Activated CD4-positive, alpha-beta T cell treated with anti-CD3 and anti-CD28 coated beads, Interleukin-2, amount 10 ng/mL, durations not matched to agents 7 days and 5 days (primary cell): ENCODE measurements at regions of chrX and their contacts with region 1.

Region 1: GRCh38 chrX:153470435-153471363 is at the start of gene HAUS7:
- DNase-seq: peak; percentile 86
- H3K4me3 Mint-ChIP-seq: peak within 1 kb of the TSS; percentile 79
- H3K27ac Mint-ChIP-seq: peak within 1 kb of the TSS; percentile 89
- H3K4me1 Mint-ChIP-seq: peaks cover 24% of the 10 kb centered on the region
- H3K27me3 Mint-ChIP-seq: peaks cover 2% of the 10 kb centered on the region
- total RNA-seq, gene HAUS7: 37.6 to 45.9 TPM

Region 2: GRCh38 chrX:153443481-153444332 is 27.0 kb before region 1 on chrX:
- CTCF ChIA-PET with region 1: no interaction called
- POLR2A ChIA-PET with region 1: no interaction called
- DNase-seq: no peak
- H3K4me3 Mint-ChIP-seq: no peak overlapping the region
- H3K27ac Mint-ChIP-seq: no peak overlapping the region
- H3K4me1 Mint-ChIP-seq: no peaks in the 10 kb centered on the region
- H3K27me3 Mint-ChIP-seq: peaks cover 2% of the 10 kb centered on the region

Region 3: DNA sequence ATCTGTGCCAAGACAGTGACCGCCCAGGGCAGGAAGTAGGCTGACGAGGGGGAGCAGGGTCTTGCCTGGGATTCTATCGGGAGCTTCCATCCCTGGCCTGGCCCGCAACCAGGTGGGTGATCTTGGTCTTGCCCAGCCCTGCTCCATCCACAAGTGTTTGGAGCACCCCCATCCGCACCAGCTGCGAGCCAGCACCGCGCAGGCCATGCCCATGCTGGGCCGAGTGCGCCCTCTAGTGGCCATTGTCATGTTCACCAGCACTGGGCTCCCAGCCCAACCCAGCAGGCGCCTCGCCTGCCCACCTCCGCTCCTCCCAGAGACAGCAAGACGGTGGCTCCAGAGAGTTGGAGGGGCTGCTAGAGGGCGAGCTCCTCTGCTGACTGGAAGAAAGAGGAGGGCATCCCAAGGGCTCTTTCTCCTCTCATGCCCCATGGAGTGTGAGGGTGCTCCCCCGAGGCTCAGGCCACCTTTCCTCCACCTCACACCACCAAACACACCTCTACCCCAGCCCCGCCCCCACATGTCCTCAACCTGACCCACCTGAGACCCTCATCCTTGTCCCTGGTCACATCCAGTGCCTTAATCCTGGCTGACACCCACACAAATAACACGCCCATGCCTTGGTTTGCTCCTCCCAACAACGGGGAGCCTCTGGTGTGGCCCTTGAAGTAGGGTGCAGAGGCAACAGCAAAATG is 36.9 kb after region 1 on chrX:
- CTCF ChIA-PET with region 1: interaction called, 30 read pairs
- POLR2A ChIA-PET with region 1: no interaction called
- DNase-seq: peak; percentile 82
- H3K4me3 Mint-ChIP-seq: no peak overlapping the region
- H3K27ac Mint-ChIP-seq: peak overlapping the region; percentile 13
- H3K4me1 Mint-ChIP-seq: peaks cover 2% of the 10 kb centered on the region
- H3K27me3 Mint-ChIP-seq: no peaks in the 10 kb centered on the region